CD8-positive, alpha-beta T cell (primary cell): ENCODE measurements at regions of chr3 and their contacts with region 1.

Region 1: GRCh38 chr3:15108082-15108545 is 9.2 kb upstream of the RBSN start:
- DNase-seq: peak; percentile 42 to 85 (median 72)
- ATAC-seq: peak; percentile 99
- H3K4me3 ChIP-seq: no peak overlapping the region
- H3K4me3 Mint-ChIP-seq: no peak overlapping the region
- H3K27ac ChIP-seq: no peak overlapping the region
- H3K27ac Mint-ChIP-seq: no peak overlapping the region
- H3K4me1 ChIP-seq: peaks cover 6% of the 10 kb centered on the region
- H3K4me1 Mint-ChIP-seq: peaks cover 6% of the 10 kb centered on the region
- H3K27me3 ChIP-seq: no peaks in the 10 kb centered on the region
- H3K27me3 Mint-ChIP-seq: peaks cover 7% of the 10 kb centered on the region
- CTCF ChIP-seq: peak; percentile 93

Region 2: GRCh38 chr3:14570089-14570488 is 538.0 kb before region 1 on chr3:
- CTCF ChIA-PET with region 1: no interaction called
- POLR2A ChIA-PET with region 1: no interaction called
- intact Hi-C with region 1: no loop called
- DNase-seq: peak in 3 of 9 experiments; percentile 14 to 56 (median 47)
- ATAC-seq: peak; percentile 80
- H3K4me3 ChIP-seq: no peak overlapping the region
- H3K4me3 Mint-ChIP-seq: no peak overlapping the region
- H3K27ac ChIP-seq: no peak overlapping the region
- H3K27ac Mint-ChIP-seq: no peak overlapping the region
- H3K4me1 ChIP-seq: peaks cover 5% of the 10 kb centered on the region
- H3K4me1 Mint-ChIP-seq: peaks cover 7% of the 10 kb centered on the region
- H3K27me3 ChIP-seq: no peaks in the 10 kb centered on the region
- H3K27me3 Mint-ChIP-seq: peaks cover 3% of the 10 kb centered on the region
- CTCF ChIP-seq: no peak

Region 3: DNA sequence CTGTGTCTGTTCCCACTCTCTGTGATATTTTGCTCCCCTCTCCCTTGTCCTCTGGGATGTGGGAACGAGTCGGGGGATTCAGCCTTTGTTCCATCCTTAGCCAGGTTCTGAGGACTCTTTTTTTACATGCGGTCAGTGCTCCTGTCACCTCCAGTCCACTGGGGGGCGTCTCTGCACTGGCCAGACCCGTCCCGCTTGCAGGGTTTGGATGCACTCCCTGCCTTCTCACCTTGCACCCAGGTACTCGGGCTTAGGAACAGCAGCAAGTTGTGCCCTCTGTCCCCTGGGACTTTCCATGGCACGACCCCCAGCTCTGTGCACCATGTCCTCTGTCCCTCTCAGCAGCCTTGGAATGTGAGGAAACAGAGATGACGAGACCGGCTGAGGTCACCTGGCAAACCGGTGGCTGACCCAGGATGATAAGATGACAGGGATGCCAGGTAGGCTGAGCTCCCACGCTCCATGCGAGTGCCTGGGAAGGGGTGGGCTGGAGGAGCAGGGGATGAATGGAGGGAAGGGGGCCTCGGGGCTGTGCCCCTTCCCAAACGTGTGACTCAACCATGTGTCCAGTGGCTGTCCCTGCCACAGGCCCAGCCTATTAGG is 316.7 kb before region 1 on chr3:
- CTCF ChIA-PET with region 1: no interaction called
- POLR2A ChIA-PET with region 1: no interaction called
- intact Hi-C with region 1: no loop called
- DNase-seq: peak; percentile 4 to 66 (median 34)
- ATAC-seq: no peak
- H3K4me3 ChIP-seq: no peak overlapping the region
- H3K4me3 Mint-ChIP-seq: no peak overlapping the region
- H3K27ac ChIP-seq: no peak overlapping the region
- H3K27ac Mint-ChIP-seq: no peak overlapping the region
- H3K4me1 ChIP-seq: no peaks in the 10 kb centered on the region
- H3K4me1 Mint-ChIP-seq: no peaks in the 10 kb centered on the region
- H3K27me3 ChIP-seq: no peaks in the 10 kb centered on the region
- H3K27me3 Mint-ChIP-seq: peaks cover 19% of the 10 kb centered on the region
- CTCF ChIP-seq: peak; percentile 15

Region 4: GRCh38 chr3:15120986-15121385 is 12.9 kb after region 1 on chr3:
- CTCF ChIA-PET with region 1: interaction called, 54 read pairs
- POLR2A ChIA-PET with region 1: interaction called, 3 read pairs
- intact Hi-C with region 1: no loop called
- DNase-seq: no peak
- ATAC-seq: no peak
- H3K4me3 ChIP-seq: no peak overlapping the region
- H3K4me3 Mint-ChIP-seq: no peak overlapping the region
- H3K27ac ChIP-seq: no peak overlapping the region
- H3K27ac Mint-ChIP-seq: no peak overlapping the region
- H3K4me1 ChIP-seq: no peaks in the 10 kb centered on the region
- H3K4me1 Mint-ChIP-seq: no peaks in the 10 kb centered on the region
- H3K27me3 ChIP-seq: no peaks in the 10 kb centered on the region
- H3K27me3 Mint-ChIP-seq: peaks cover 2% of the 10 kb centered on the region
- CTCF ChIP-seq: no peak

Region 5: DNA sequence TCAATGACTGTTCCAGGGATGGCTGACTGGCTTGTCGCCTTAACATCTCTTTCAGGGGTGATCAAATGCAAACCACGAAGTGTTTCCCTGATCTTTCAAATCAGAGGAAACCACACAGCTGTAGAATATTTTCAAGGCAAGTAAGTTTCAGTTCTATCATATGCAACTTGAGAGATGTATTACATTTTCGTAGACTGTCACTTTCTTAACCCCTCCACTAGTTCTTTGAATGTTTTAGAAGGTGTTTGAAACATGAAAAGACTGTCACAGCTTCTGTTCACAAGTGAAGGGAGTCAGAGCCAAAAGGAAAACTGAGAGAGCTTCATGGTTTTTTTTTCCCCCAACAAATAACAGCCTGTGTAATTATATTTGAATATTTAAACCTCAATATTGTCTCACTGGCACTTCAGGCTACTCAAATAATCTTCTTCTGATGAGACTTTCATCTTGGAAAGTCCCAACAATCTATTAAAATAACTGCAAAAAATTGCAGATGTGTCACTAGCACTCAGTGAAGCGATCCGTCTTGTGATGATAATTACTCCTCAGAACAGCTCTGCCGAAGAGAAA is 72.0 kb after region 1 on chr3:
- CTCF ChIA-PET with region 1: no interaction called
- POLR2A ChIA-PET with region 1: no interaction called
- intact Hi-C with region 1: no loop called
- DNase-seq: no peak
- ATAC-seq: no peak
- H3K4me3 ChIP-seq: no peak overlapping the region
- H3K4me3 Mint-ChIP-seq: no peak overlapping the region
- H3K27ac ChIP-seq: no peak overlapping the region
- H3K27ac Mint-ChIP-seq: no peak overlapping the region
- H3K4me1 ChIP-seq: peaks cover 5% of the 10 kb centered on the region
- H3K4me1 Mint-ChIP-seq: peaks cover 8% of the 10 kb centered on the region
- H3K27me3 ChIP-seq: no peaks in the 10 kb centered on the region
- H3K27me3 Mint-ChIP-seq: peaks cover 18% of the 10 kb centered on the region
- CTCF ChIP-seq: no peak

Region 6: GRCh38 chr3:15405448-15406050 is 297.4 kb after region 1 on chr3:
- CTCF ChIA-PET with region 1: interaction called, 6 read pairs
- POLR2A ChIA-PET with region 1: no interaction called
- intact Hi-C with region 1: loop called (anchors 5 kb)
- DNase-seq: peak in 3 of 9 experiments; percentile 22 to 77 (median 69)
- ATAC-seq: peak; percentile 73
- H3K4me3 ChIP-seq: no peak overlapping the region
- H3K4me3 Mint-ChIP-seq: no peak overlapping the region
- H3K27ac ChIP-seq: no peak overlapping the region
- H3K27ac Mint-ChIP-seq: no peak overlapping the region
- H3K4me1 ChIP-seq: no peaks in the 10 kb centered on the region
- H3K4me1 Mint-ChIP-seq: peaks cover 4% of the 10 kb centered on the region
- H3K27me3 ChIP-seq: no peaks in the 10 kb centered on the region
- H3K27me3 Mint-ChIP-seq: no peaks in the 10 kb centered on the region
- CTCF ChIP-seq: peak; percentile 61

Region 7: DNA sequence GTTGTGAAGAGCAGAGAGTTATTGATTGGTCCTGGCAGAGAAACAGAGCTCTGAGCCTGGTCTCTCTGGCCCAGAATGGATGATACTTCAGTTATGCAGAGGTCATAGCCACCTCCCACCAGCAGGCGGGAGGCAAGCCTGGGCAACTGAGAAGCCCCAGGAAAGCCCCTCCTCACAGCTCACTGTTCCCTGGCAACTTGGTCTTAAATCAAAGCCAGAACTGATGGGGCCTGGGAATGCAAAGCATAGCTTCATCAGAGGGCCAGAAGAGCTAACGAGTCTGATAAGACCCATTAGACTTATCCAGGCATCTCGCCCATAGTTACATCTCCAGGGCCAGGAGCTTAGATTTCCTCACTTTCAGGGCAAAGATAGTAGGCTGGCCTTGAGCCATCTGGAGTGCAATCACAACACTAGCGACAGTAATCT is 418.9 kb after region 1 on chr3:
- CTCF ChIA-PET with region 1: no interaction called
- POLR2A ChIA-PET with region 1: no interaction called
- intact Hi-C with region 1: no loop called
- DNase-seq: no peak
- ATAC-seq: no peak
- H3K4me3 ChIP-seq: no peak overlapping the region
- H3K4me3 Mint-ChIP-seq: no peak overlapping the region
- H3K27ac ChIP-seq: no peak overlapping the region
- H3K27ac Mint-ChIP-seq: no peak overlapping the region
- H3K4me1 ChIP-seq: peaks cover 16% of the 10 kb centered on the region
- H3K4me1 Mint-ChIP-seq: peaks cover 28% of the 10 kb centered on the region
- H3K27me3 ChIP-seq: no peaks in the 10 kb centered on the region
- H3K27me3 Mint-ChIP-seq: no peaks in the 10 kb centered on the region
- CTCF ChIP-seq: no peak

Region 8: GRCh38 chr3:15557511-15557946 is 449.4 kb after region 1 on chr3:
- CTCF ChIA-PET with region 1: no interaction called
- POLR2A ChIA-PET with region 1: no interaction called
- intact Hi-C with region 1: loop called in 1 of 2 experiments (anchors 5 kb)
- DNase-seq: peak in 7 of 9 experiments; percentile 8 to 80 (median 43)
- ATAC-seq: peak; percentile 99
- H3K4me3 ChIP-seq: no peak overlapping the region
- H3K4me3 Mint-ChIP-seq: no peak overlapping the region
- H3K27ac ChIP-seq: no peak overlapping the region
- H3K27ac Mint-ChIP-seq: no peak overlapping the region
- H3K4me1 ChIP-seq: peaks cover 3% of the 10 kb centered on the region
- H3K4me1 Mint-ChIP-seq: peaks cover 16% of the 10 kb centered on the region
- H3K27me3 ChIP-seq: no peaks in the 10 kb centered on the region
- H3K27me3 Mint-ChIP-seq: no peaks in the 10 kb centered on the region
- CTCF ChIP-seq: peak; percentile 76

Region 9: DNA sequence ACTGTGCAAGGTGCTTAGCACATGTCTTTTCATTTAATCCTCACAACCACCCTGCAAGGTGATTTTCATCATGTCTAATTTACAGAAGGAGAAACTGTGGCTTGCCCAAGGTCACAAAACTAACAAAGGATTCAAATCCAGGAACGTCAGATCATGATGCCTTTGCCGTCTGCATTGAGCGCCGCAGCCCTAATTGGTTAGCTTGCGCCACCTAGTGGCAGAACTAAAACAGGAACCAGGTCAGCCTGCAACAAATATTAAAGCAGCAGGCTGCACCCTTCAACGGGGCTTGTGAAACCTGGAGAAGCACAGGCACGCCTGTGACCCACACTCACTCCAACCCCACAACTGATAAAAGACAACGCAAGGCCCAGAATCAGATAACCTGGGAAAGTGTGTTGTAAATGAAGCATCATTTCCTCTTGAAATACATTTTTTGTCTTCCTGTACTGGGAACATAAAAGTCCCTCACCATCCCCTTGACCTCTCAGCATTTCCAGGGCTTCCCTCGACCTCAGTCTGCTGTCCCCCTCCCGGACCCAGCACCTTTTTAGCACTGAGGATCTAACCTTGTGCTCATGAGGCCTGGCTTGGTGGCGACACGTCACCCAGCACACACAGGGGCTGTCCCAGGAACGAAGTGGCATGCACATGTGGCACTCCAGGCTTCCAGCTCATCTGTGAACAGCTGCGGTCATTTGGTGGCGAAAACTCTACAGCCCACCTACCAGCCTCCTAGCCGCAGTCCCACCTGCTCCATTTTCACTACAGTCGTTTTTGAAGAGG is 1139.4 kb after region 1 on chr3:
- CTCF ChIA-PET with region 1: no interaction called
- POLR2A ChIA-PET with region 1: no interaction called
- intact Hi-C with region 1: loop called in 1 of 2 experiments (anchors 5 kb)
- DNase-seq: peak; percentile 54 to 86 (median 76)
- ATAC-seq: peak; percentile 90
- H3K4me3 ChIP-seq: no peak overlapping the region
- H3K4me3 Mint-ChIP-seq: no peak overlapping the region
- H3K27ac ChIP-seq: no peak overlapping the region
- H3K27ac Mint-ChIP-seq: no peak overlapping the region
- H3K4me1 ChIP-seq: no peaks in the 10 kb centered on the region
- H3K4me1 Mint-ChIP-seq: peaks cover 7% of the 10 kb centered on the region
- H3K27me3 ChIP-seq: no peaks in the 10 kb centered on the region
- H3K27me3 Mint-ChIP-seq: peaks cover 4% of the 10 kb centered on the region
- CTCF ChIP-seq: peak; percentile 79